ENCODE measurements at regions of chr13 and their contacts with region 1.

Region 1: DNA sequence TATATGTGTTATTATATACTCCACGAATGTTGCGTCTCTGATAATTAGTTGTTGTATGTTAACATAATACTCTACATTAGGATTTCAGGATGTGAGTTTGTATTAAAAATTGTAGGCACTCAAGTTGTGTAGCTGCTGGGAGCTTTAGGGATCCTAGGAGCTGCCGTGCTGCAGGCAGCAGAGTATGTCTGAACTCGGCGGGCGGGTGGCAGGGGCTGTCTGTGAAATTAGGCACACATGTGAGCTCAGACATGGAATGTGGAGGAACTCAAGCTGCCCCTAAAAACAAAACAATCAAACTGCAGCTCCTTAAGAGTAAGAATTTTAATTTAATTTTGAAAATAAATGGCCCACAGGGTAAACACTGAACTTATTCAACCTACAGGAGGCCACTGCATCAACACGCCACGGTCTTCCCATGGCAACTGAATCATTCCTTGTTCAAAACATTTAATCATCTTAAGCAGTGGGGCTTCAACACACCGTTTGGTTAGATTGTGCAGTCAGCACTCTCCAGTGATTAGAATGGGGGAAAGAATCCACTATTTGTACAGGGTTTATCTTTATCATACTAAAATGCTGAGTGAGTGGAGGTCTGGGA is 22.7 kb downstream of the SERTM1 start:
- DNase-seq: no peak
- H3K4me3 ChIP-seq: peak overlapping the region in 1 of 59 donors; percentile 11
- H3K27ac ChIP-seq: no peak overlapping the region
- H3K27me3 ChIP-seq: peaks cover 0 to 2% (median 0%) of the 10 kb centered on the region in 45 donors
- CTCF ChIP-seq: no peak

Region 2: DNA sequence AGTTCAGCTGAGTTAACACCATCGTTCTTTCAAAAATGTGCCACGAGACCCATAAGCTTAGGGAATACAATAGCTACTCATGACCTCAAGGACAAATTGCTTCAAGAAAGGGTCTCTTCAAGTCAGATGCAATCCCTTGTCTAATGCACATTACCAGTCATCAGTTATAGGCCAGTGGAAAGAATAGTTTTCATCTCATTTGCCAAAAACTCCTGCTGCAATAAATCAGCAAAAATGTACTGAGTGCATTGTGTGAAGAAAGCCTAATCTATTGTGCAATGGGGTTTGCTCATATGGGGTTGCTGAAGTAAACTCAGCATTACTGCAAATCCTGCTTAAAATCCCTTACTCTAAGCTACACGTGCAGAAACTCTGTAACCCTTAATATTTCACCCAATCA is 1962.8 kb before region 1 on chr13:
- intact Hi-C with region 1: no loop called
- DNase-seq: no peak
- H3K4me3 ChIP-seq: no peak overlapping the region
- H3K27ac ChIP-seq: no peak overlapping the region
- H3K27me3 ChIP-seq: no peaks in the 10 kb centered on the region
- CTCF ChIP-seq: no peak

Region 3: GRCh38 chr13:35744566-35745178 is 951.8 kb before region 1 on chr13:
- intact Hi-C with region 1: no loop called
- DNase-seq: no peak
- H3K4me3 ChIP-seq: no peak overlapping the region
- H3K27ac ChIP-seq: no peak overlapping the region
- H3K27me3 ChIP-seq: peaks cover 0 to 5% (median 0%) of the 10 kb centered on the region in 45 donors
- CTCF ChIP-seq: no peak

Region 4: GRCh38 chr13:36582977-36583376 is 113.5 kb before region 1 on chr13:
- intact Hi-C with region 1: no loop called
- DNase-seq: no peak
- H3K4me3 ChIP-seq: no peak overlapping the region
- H3K27ac ChIP-seq: no peak overlapping the region
- H3K27me3 ChIP-seq: no peaks in the 10 kb centered on the region
- CTCF ChIP-seq: no peak

Region 5: GRCh38 chr13:36639610-36640009 is 56.9 kb before region 1 on chr13:
- intact Hi-C with region 1: no loop called
- DNase-seq: no peak
- H3K4me3 ChIP-seq: no peak overlapping the region
- H3K27ac ChIP-seq: no peak overlapping the region
- H3K27me3 ChIP-seq: peaks cover 0 to 3% (median 0%) of the 10 kb centered on the region in 45 donors
- CTCF ChIP-seq: no peak

Region 6: DNA sequence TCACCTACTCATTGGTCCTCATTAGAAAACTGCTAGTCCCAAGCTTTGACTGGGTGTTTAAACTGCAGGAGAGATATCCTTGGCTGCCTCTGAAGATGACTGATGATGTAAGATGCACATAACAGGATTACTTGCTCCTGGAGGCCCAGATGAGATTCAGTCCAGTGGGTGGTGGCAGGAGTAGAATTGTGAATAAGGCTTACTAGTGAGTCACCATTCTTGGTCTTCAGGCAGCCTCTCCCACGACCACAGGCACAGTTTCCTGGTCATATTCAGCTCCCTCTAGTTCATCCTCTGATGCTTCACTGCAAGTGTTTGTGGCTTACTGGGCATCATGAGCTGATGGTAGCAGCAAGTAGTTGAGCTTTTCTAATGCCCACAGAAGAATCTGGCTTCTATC is 10.6 kb before region 1 on chr13:
- intact Hi-C with region 1: loop called in 1 of 2 experiments (anchors 1 kb)
- DNase-seq: peak in 2 of 10 donors; percentile 47 to 52
- H3K4me3 ChIP-seq: no peak overlapping the region
- H3K27ac ChIP-seq: no peak overlapping the region
- H3K27me3 ChIP-seq: no peaks in the 10 kb centered on the region
- CTCF ChIP-seq: no peak

Measured in dorsolateral prefrontal cortex (tissue), 120 donors.